RWPE1 (cell line): ENCODE measurements at regions of chr1 and their contacts with region 1.

Region 1: GRCh38 chr1:227762233-227762911 is 27.1 kb downstream of the SNAP47 start:
- DNase-seq: peak; percentile 97
- H3K27ac ChIP-seq: peak overlapping the region; percentile 85
- CTCF ChIP-seq: peak; percentile 93

Region 2: GRCh38 chr1:227793948-227794816 is 31.8 kb after region 1 on chr1:
- CTCF ChIA-PET with region 1: interaction called, 21 read pairs
- POLR2A ChIA-PET with region 1: interaction called, 3 read pairs
- DNase-seq: peak; percentile 47
- H3K27ac ChIP-seq: peak overlapping the region; percentile 83
- CTCF ChIP-seq: no peak